Heart left ventricle (tissue), 16 donors: ENCODE measurements at regions of chr1 and their contacts with region 1.

Region 1: GRCh38 chr1:235052067-235053008 is 76.3 kb downstream of the TOMM20 start:
- DNase-seq: no peak
- ATAC-seq: no peak
- H3K4me3 ChIP-seq: no peak overlapping the region
- H3K27ac ChIP-seq: peak overlapping the region in 3 of 12 donors; percentile 3 to 22 (median 14)
- H3K4me1 ChIP-seq: peaks cover 2 to 48% (median 24%) of the 10 kb centered on the region in 12 donors
- H3K27me3 ChIP-seq: no peaks in the 10 kb centered on the region
- CTCF ChIP-seq: no peak
- POLR2A ChIP-seq: no peak

Region 2: GRCh38 chr1:235067263-235068172 is 15.2 kb after region 1 on chr1:
- intact Hi-C with region 1: loop called in 2 of 10 experiments (anchors 2 kb)
- DNase-seq: peak; percentile 68 to 89 (median 78)
- ATAC-seq: peak; percentile 57 to 91 (median 80)
- H3K4me3 ChIP-seq: no peak overlapping the region
- H3K27ac ChIP-seq: peak overlapping the region in 10 of 12 donors; percentile 0 to 78 (median 54)
- H3K4me1 ChIP-seq: peaks cover 6 to 50% (median 37%) of the 10 kb centered on the region in 12 donors
- H3K27me3 ChIP-seq: no peaks in the 10 kb centered on the region
- CTCF ChIP-seq: no peak
- POLR2A ChIP-seq: no peak

Region 3: GRCh38 chr1:235136111-235136510 is 83.8 kb after region 1 on chr1:
- intact Hi-C with region 1: no loop called
- DNase-seq: no peak
- ATAC-seq: peak in 2 of 4 donors; percentile 60 to 63
- H3K4me3 ChIP-seq: no peak overlapping the region
- H3K27ac ChIP-seq: no peak overlapping the region
- H3K4me1 ChIP-seq: peaks cover 0 to 5% (median 0%) of the 10 kb centered on the region in 12 donors
- H3K27me3 ChIP-seq: no peaks in the 10 kb centered on the region
- CTCF ChIP-seq: no peak
- POLR2A ChIP-seq: no peak